Endothelial cell of umbilical vein (primary cell): ENCODE measurements at regions of chr7 and their contacts with region 1.

Region 1: DNA sequence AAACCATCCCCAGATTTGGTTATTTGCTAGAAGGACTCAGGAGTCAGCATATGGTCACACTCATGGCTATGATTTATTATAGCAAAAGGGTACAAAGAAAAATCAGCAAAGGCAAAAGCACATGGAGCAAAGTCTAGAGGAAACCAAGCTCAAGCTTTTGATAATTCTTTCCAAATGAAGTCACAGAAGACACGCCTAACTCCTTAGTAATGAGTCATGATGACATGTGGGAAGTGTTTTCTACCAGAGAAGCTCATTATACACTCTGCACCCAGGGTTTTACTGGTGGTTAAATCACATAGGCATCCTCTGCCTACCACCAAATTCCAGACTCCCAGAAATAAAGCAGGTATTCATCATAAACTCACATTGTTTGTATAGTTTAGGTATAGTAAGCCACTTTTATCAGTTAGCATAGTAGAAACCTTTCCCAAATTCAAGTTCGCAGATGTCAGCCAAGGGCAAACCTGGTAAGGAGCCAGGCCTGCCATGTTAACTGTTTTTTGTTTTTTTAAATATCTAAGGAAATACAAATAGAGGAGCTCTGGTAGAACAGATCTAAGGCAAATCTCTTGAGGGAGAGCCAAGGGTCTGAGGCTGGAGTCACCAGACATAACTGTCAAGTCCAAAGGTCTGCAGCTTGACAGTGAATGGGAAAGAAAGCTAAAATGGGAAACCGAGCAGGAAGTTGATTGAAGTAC is 15.4 kb upstream of the HIBADH start:
- DNase-seq: peak; percentile 78
- H3K4me3 ChIP-seq: no peak overlapping the region
- H3K27ac ChIP-seq: peak overlapping the region; percentile 94
- H3K4me1 ChIP-seq: peaks cover 22% of the 10 kb centered on the region
- H3K27me3 ChIP-seq: no peaks in the 10 kb centered on the region
- CTCF ChIP-seq: no peak
- POLR2A ChIP-seq: peak; percentile 25

Region 2: GRCh38 chr7:27640914-27641580 is 37.0 kb before region 1 on chr7:
- CTCF ChIA-PET with region 1: no interaction called
- POLR2A ChIA-PET with region 1: no interaction called
- dilution Hi-C with region 1: no loop called
- intact Hi-C with region 1: loop called (anchors 1 kb)
- DNase-seq: peak; percentile 96
- H3K4me3 ChIP-seq: peak overlapping the region in 1 of 3 experiments; percentile 36
- H3K27ac ChIP-seq: peak overlapping the region; percentile 85
- H3K4me1 ChIP-seq: peaks cover 18% of the 10 kb centered on the region
- H3K27me3 ChIP-seq: no peaks in the 10 kb centered on the region
- CTCF ChIP-seq: no peak
- POLR2A ChIP-seq: no peak

Region 3: GRCh38 chr7:27850531-27850930 is 172.5 kb after region 1 on chr7:
- CTCF ChIA-PET with region 1: no interaction called
- POLR2A ChIA-PET with region 1: no interaction called
- dilution Hi-C with region 1: no loop called
- intact Hi-C with region 1: no loop called
- DNase-seq: no peak
- H3K4me3 ChIP-seq: no peak overlapping the region
- H3K27ac ChIP-seq: no peak overlapping the region
- H3K4me1 ChIP-seq: no peaks in the 10 kb centered on the region
- H3K27me3 ChIP-seq: no peaks in the 10 kb centered on the region
- CTCF ChIP-seq: no peak
- POLR2A ChIP-seq: no peak

Region 4: DNA sequence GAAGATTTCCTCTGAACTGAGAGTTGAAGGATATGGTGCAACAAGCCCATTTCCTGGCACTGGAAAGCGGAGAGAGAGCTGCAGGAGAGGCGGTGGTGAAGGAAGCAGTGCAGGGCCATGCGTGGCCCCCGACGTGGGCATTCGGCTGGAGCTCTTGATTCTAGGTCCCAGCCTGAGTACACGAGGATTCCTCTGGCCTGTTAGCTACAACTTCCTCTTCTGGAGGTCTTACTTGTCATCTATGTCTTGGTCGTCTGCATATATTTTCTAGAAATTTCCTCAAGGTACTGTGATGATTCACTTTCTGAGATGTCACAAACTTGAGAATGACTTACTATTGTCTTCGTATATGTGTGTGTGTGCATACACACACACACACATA is 561.8 kb after region 1 on chr7:
- CTCF ChIA-PET with region 1: no interaction called
- POLR2A ChIA-PET with region 1: no interaction called
- dilution Hi-C with region 1: no loop called
- intact Hi-C with region 1: no loop called
- DNase-seq: no peak
- H3K4me3 ChIP-seq: no peak overlapping the region
- H3K27ac ChIP-seq: no peak overlapping the region
- H3K4me1 ChIP-seq: peaks cover 6% of the 10 kb centered on the region
- H3K27me3 ChIP-seq: peaks cover 0 to 2% of the 10 kb centered on the region in 2 experiments
- CTCF ChIP-seq: no peak
- POLR2A ChIP-seq: no peak